ENCODE measurements at regions of chr12 and their contacts with region 1.

Region 1: DNA sequence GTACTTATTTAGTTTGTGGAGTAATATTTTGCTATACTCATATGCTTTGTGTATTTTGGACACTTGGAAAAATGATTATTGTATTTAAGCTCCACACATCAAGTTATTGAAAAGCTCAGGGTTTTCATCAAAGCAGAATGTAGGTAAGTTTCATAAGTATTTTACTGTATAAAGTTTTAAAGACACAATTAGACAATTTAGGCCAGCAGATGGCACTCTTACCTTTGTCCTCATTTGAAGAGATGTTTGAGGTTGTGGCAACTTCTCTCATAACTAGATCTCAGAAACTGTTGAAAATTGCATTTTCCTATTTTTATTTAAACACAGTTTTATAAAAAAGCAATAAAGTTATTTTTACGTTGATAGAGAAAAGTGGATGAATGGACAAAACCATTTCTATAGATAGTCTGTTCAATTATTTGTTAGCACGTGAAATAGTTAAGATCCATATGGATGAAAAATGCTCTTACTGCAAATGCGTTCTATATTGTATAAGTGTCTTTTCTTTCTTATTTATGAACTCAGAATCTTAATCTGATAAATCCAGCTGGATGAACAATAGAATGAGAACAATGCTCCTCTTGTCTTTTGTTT is 300.0 kb downstream of the AEBP2 start:
- DNase-seq: peak; percentile 75
- ATAC-seq: peak; percentile 53; the same call in 1 of the 2 replicates
- H3K4me3 ChIP-seq: no peak overlapping the region
- H3K27ac ChIP-seq: no peak overlapping the region
- H3K4me1 ChIP-seq: peaks cover 2% of the 10 kb centered on the region; the same call in 1 of the 2 replicates
- H3K27me3 ChIP-seq: no peaks in the 10 kb centered on the region
- CTCF ChIP-seq: peak; percentile 77
- POLR2A ChIP-seq: no peak
- RAD21 ChIP-seq: peak; percentile 79

Region 2: GRCh38 chr12:19507823-19508222 is 231.5 kb before region 1 on chr12:
- CTCF ChIA-PET with region 1: no interaction called
- POLR2A ChIA-PET with region 1: no interaction called
- dilution Hi-C with region 1: no loop called
- in situ Hi-C with region 1: no loop called
- intact Hi-C with region 1: loop called (anchors 2 kb)
- DNase-seq: peak; percentile 19
- ATAC-seq: peak; percentile 70
- H3K4me3 ChIP-seq: no peak overlapping the region
- H3K27ac ChIP-seq: no peak overlapping the region
- H3K4me1 ChIP-seq: peaks cover 5% of the 10 kb centered on the region; the same call in 1 of the 2 replicates
- H3K27me3 ChIP-seq: no peaks in the 10 kb centered on the region
- CTCF ChIP-seq: peak; percentile 37
- POLR2A ChIP-seq: no peak
- RAD21 ChIP-seq: peak; percentile 38

Region 3: DNA sequence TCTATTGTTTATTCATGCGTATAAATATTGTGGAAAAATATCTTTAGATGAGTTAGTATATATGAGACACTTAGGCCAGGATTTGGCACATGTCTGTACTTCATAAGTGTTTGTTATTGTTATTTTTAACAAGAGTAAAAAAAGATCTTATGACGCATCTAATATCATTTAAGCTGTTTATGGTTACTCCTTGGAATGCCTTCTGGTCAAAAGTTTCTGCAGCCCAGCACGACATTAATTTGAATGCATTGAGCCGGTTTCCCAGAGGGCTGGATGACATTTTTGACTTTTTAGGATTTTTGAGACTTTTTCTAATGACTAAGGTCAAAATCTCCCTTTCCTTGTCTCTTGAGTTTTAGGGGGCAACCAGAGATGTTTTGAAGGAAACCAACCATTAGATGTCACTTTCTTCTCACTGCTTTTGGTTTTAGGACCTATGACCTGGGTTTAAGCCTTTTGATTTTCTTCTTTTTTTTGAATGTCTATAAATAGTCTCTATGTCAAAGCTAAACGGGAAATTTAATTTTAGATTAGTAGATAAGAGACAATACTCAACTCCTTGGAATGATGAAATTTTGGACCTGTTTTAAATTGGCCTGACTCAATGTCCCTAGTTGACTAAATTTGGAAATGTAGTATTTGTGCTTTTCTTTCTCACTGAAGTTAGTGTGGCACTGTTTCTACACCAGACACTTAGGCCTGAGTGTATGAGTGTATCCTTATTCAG is 84.5 kb before region 1 on chr12:
- CTCF ChIA-PET with region 1: no interaction called
- POLR2A ChIA-PET with region 1: no interaction called
- dilution Hi-C with region 1: no loop called
- in situ Hi-C with region 1: no loop called
- intact Hi-C with region 1: loop called (anchors 2 kb)
- DNase-seq: peak; percentile 84
- ATAC-seq: peak; percentile 71
- H3K4me3 ChIP-seq: no peak overlapping the region
- H3K27ac ChIP-seq: peak overlapping the region; percentile 96; the same call in 1 of the 2 replicates
- H3K4me1 ChIP-seq: peaks cover 23% of the 10 kb centered on the region
- H3K27me3 ChIP-seq: no peaks in the 10 kb centered on the region
- CTCF ChIP-seq: 0 out of 2 replicates have a peak, but pooled peaks have one; percentile 12
- POLR2A ChIP-seq: no peak
- RAD21 ChIP-seq: no peak

Region 4: GRCh38 chr12:19810213-19810612 is 70.9 kb after region 1 on chr12:
- CTCF ChIA-PET with region 1: no interaction called
- POLR2A ChIA-PET with region 1: no interaction called
- dilution Hi-C with region 1: no loop called
- in situ Hi-C with region 1: no loop called
- intact Hi-C with region 1: no loop called
- DNase-seq: no peak
- ATAC-seq: no peak
- H3K4me3 ChIP-seq: no peak overlapping the region
- H3K27ac ChIP-seq: no peak overlapping the region
- H3K4me1 ChIP-seq: peaks cover 3% of the 10 kb centered on the region; the same call in 1 of the 2 replicates
- H3K27me3 ChIP-seq: no peaks in the 10 kb centered on the region; the same call in 1 of the 2 replicates
- CTCF ChIP-seq: no peak
- POLR2A ChIP-seq: no peak
- RAD21 ChIP-seq: no peak

Region 5: DNA sequence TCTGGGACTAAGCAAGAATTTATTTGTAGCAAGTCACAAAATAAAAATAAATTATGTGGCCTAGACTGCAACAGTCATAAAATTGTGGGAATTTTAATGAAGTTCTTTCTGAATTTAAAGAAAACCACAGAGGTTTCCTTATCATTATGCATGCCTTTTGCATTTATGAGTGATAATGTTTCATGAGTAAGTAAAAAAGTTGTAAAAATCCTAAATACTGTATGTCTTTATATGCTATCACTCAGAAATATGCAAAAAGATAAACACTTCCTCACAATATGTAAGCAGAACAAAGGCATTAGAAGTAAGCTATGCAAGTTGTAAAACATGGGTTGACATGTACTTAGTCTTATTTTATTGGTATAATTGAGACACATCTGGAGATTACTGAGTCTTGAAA is 389.6 kb after region 1 on chr12:
- CTCF ChIA-PET with region 1: no interaction called
- POLR2A ChIA-PET with region 1: no interaction called
- dilution Hi-C with region 1: no loop called
- in situ Hi-C with region 1: no loop called
- intact Hi-C with region 1: no loop called
- DNase-seq: peak; percentile 26
- ATAC-seq: peak; percentile 61
- H3K4me3 ChIP-seq: no peak overlapping the region
- H3K27ac ChIP-seq: no peak overlapping the region
- H3K4me1 ChIP-seq: peaks cover 2% of the 10 kb centered on the region; the same call in 1 of the 2 replicates
- H3K27me3 ChIP-seq: no peaks in the 10 kb centered on the region
- CTCF ChIP-seq: no peak
- POLR2A ChIP-seq: no peak
- RAD21 ChIP-seq: no peak

Region 6: GRCh38 chr12:20212658-20213555 is 473.6 kb after region 1 on chr12:
- CTCF ChIA-PET with region 1: no interaction called
- POLR2A ChIA-PET with region 1: no interaction called
- dilution Hi-C with region 1: no loop called
- in situ Hi-C with region 1: loop called (anchors 10 kb)
- intact Hi-C with region 1: loop called (anchors 5 kb)
- DNase-seq: peak; percentile 98
- ATAC-seq: peak; percentile 99
- H3K4me3 ChIP-seq: no peak overlapping the region
- H3K27ac ChIP-seq: peak overlapping the region; percentile 65; the same call in 1 of the 2 replicates
- H3K4me1 ChIP-seq: peaks cover 1% of the 10 kb centered on the region
- H3K27me3 ChIP-seq: no peaks in the 10 kb centered on the region
- CTCF ChIP-seq: no peak
- POLR2A ChIP-seq: no peak
- RAD21 ChIP-seq: no peak

Region 7: DNA sequence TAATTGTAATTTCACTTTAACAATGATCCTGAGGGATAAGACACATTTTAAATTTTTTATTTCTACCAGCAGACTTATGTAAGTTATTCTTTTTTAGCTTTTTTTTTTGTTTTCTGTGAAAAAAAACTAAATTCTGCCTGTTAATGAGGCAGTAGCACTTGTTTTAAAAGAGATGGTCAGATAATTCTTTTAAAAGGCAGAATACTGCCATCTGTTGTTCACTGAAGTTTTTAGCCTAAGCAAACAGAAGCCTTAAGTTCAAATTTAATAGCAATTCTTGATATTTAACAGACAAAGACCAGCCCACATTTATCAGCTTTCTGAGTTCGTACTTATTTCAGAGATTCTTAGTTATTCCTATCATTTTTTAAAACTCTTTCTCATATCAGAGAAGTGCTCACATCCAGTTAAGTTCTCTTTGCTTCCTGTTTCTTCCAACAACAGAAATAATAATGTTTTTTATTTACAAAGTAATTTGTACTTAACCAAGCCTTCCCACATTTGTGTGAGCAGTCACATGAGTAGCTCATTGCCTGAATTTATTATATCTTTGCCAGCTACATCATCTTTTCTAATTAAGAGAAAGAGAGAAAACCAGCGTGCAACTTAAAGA is 862.5 kb after region 1 on chr12:
- CTCF ChIA-PET with region 1: no interaction called
- POLR2A ChIA-PET with region 1: no interaction called
- dilution Hi-C with region 1: no loop called
- in situ Hi-C with region 1: no loop called
- intact Hi-C with region 1: loop called (anchors 2 kb)
- DNase-seq: peak; percentile 73
- ATAC-seq: peak; percentile 52
- H3K4me3 ChIP-seq: no peak overlapping the region
- H3K27ac ChIP-seq: no peak overlapping the region
- H3K4me1 ChIP-seq: no peaks in the 10 kb centered on the region; the same call in 1 of the 2 replicates
- H3K27me3 ChIP-seq: no peaks in the 10 kb centered on the region
- CTCF ChIP-seq: peak; percentile 66
- POLR2A ChIP-seq: no peak
- RAD21 ChIP-seq: peak; percentile 54